CD4-positive, alpha-beta T cell (primary cell): ENCODE measurements at regions of chr12 and their contacts with region 1.

Region 1: GRCh38 chr12:106841510-106842302 is 67.2 kb downstream of the RIC8B start:
- DNase-seq: peak in 12 of 14 experiments; percentile 2 to 68 (median 18)
- ATAC-seq: no peak
- H3K4me3 ChIP-seq: no peak overlapping the region
- H3K4me3 Mint-ChIP-seq: no peak overlapping the region
- H3K27ac ChIP-seq: no peak overlapping the region
- H3K27ac Mint-ChIP-seq: peak overlapping the region; percentile 15
- H3K4me1 ChIP-seq: no peaks in the 10 kb centered on the region
- H3K4me1 Mint-ChIP-seq: peaks cover 25% of the 10 kb centered on the region
- H3K27me3 ChIP-seq: no peaks in the 10 kb centered on the region
- H3K27me3 Mint-ChIP-seq: no peaks in the 10 kb centered on the region
- CTCF ChIP-seq: peak; percentile 68

Region 2: GRCh38 chr12:106386813-106387535 is 454.7 kb before region 1 on chr12:
- CTCF ChIA-PET with region 1: interaction called, 4 read pairs
- POLR2A ChIA-PET with region 1: no interaction called
- intact Hi-C with region 1: loop called (anchors 1 kb)
- DNase-seq: no peak
- ATAC-seq: no peak
- H3K4me3 ChIP-seq: no peak overlapping the region
- H3K4me3 Mint-ChIP-seq: no peak overlapping the region
- H3K27ac ChIP-seq: no peak overlapping the region
- H3K27ac Mint-ChIP-seq: no peak overlapping the region
- H3K4me1 ChIP-seq: peaks cover 3% of the 10 kb centered on the region
- H3K4me1 Mint-ChIP-seq: no peaks in the 10 kb centered on the region
- H3K27me3 ChIP-seq: no peaks in the 10 kb centered on the region
- H3K27me3 Mint-ChIP-seq: no peaks in the 10 kb centered on the region
- CTCF ChIP-seq: no peak

Region 3: GRCh38 chr12:106722854-106723253 is 118.9 kb before region 1 on chr12:
- CTCF ChIA-PET with region 1: no interaction called
- POLR2A ChIA-PET with region 1: no interaction called
- intact Hi-C with region 1: loop called in 1 of 2 experiments (anchors 5 kb)
- DNase-seq: no peak
- ATAC-seq: no peak
- H3K4me3 ChIP-seq: no peak overlapping the region
- H3K4me3 Mint-ChIP-seq: no peak overlapping the region
- H3K27ac ChIP-seq: no peak overlapping the region
- H3K27ac Mint-ChIP-seq: no peak overlapping the region
- H3K4me1 ChIP-seq: no peaks in the 10 kb centered on the region
- H3K4me1 Mint-ChIP-seq: no peaks in the 10 kb centered on the region
- H3K27me3 ChIP-seq: no peaks in the 10 kb centered on the region
- H3K27me3 Mint-ChIP-seq: no peaks in the 10 kb centered on the region
- CTCF ChIP-seq: no peak

Region 4: GRCh38 chr12:106736051-106736957 is 105.4 kb before region 1 on chr12:
- CTCF ChIA-PET with region 1: interaction called, 3 read pairs
- POLR2A ChIA-PET with region 1: no interaction called
- intact Hi-C with region 1: loop called (anchors 1 to 2 kb)
- DNase-seq: peak in 6 of 14 experiments; percentile 9 to 69 (median 54)
- ATAC-seq: peak; percentile 55
- H3K4me3 ChIP-seq: no peak overlapping the region
- H3K4me3 Mint-ChIP-seq: no peak overlapping the region
- H3K27ac ChIP-seq: no peak overlapping the region
- H3K27ac Mint-ChIP-seq: no peak overlapping the region
- H3K4me1 ChIP-seq: no peaks in the 10 kb centered on the region
- H3K4me1 Mint-ChIP-seq: peaks cover 6% of the 10 kb centered on the region
- H3K27me3 ChIP-seq: no peaks in the 10 kb centered on the region
- H3K27me3 Mint-ChIP-seq: no peaks in the 10 kb centered on the region
- CTCF ChIP-seq: no peak